ENCODE measurements at regions of chr15 and their contacts with region 1.

Region 1: GRCh38 chr15:43769584-43770228 is 7.1 kb downstream of the ELL3 start:
- DNase-seq: peak; percentile 56 to 77 (median 62)
- ATAC-seq: peak; percentile 86
- H3K4me3 ChIP-seq: no peak overlapping the region
- H3K27ac ChIP-seq: no peak overlapping the region
- H3K4me1 ChIP-seq: peaks cover 0 to 2% of the 10 kb centered on the region in 2 experiments; a peak in 2 of 5 replicates
- H3K27me3 ChIP-seq: no peaks in the 10 kb centered on the region
- CTCF ChIP-seq: peak; percentile 57 to 86 (median 77)
- EP300 ChIP-seq: no peak
- POLR2A ChIP-seq: no peak
- RAD21 ChIP-seq: peak in 1 of 2 experiments; percentile 53; a peak in 2 of 4 replicates

Region 2: DNA sequence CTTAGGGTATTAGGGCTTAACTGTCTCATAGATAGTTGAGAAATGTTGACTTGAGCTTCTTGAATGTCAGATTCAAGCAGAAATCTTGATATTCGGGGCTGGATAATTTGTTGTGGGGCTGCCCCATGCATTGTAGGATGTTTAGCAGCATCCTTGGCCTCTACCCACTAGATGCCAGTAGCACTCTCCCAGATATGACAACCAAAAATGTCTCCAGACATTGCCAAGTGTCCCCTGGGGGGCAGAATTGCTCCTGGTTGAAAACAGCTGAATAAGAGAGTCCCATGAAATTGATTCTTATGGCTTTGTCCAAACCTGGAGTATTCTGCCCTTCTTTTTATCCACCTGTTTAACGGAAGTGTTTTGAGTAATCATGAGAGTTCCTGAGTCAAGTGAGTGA is 423.4 kb before region 1 on chr15:
- CTCF ChIA-PET with region 1: interaction called, 10 read pairs
- POLR2A ChIA-PET with region 1: no interaction called
- in situ Hi-C with region 1: no loop called
- intact Hi-C with region 1: no loop called
- DNase-seq: peak in 1 of 4 experiments; percentile 29
- ATAC-seq: peak; percentile 60; the same call in 2 of the 3 replicates
- H3K4me3 ChIP-seq: no peak overlapping the region
- H3K27ac ChIP-seq: no peak overlapping the region
- H3K4me1 ChIP-seq: no peaks in the 10 kb centered on the region
- H3K27me3 ChIP-seq: no peaks in the 10 kb centered on the region
- CTCF ChIP-seq: peak; percentile 44 to 79 (median 75)
- EP300 ChIP-seq: no peak
- POLR2A ChIP-seq: no peak
- RAD21 ChIP-seq: peak; percentile 28 to 57